Activated CD8-positive, alpha-beta T cell treated with anti-CD3 and anti-CD28 coated beads for 36 hours (primary cell): ENCODE measurements at regions of chr10 and their contacts with region 1.

Region 1: DNA sequence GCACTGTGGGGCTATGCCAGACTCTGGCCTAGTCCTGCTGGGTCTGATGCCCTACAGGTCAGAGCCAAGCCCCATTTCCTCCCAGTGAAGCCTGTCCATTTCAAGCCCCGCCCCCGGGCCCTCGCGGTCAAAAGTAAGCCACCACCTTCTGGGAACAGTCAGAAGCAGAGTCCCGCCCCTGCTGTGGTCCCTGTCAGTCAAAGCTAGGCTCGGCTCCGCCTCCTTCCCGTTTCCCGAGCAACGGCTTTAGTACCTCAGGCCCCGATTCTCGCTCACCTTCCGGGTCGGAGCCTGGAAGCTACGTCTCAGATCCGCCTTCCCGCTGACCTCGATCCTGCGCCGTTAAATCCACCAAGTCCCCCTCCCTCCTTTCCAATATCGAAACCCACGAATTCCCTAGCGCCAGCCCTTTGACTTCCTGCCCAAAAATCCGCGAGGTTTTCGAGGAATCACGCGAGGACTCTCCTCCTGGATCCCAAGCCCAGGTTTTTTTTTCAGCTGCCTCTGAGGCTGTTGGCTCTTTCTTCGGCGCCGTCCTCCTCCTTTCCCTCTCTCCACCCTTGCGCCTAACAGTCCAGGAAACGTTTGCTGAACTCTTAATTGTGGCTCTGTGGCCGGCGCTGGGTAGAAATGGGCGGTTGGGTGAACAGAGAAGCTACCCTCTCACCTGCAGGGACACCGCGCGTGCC is 11.8 kb downstream of the SFXN3 start:
- DNase-seq: peak; percentile 98
- ATAC-seq: peak; percentile 96
- H3K4me3 Mint-ChIP-seq: peak overlapping the region; percentile 80
- H3K27ac Mint-ChIP-seq: peak overlapping the region; percentile 81
- H3K4me1 Mint-ChIP-seq: peaks cover 21% of the 10 kb centered on the region
- H3K27me3 Mint-ChIP-seq: peaks cover 17% of the 10 kb centered on the region
- CTCF ChIP-seq: no peak

Region 2: GRCh38 chr10:101031128-101031795 is 11.5 kb before region 1 on chr10 and contains the starts of genes PDZD7 and SFXN3:
- CTCF ChIA-PET with region 1: interaction called, 22 read pairs
- POLR2A ChIA-PET with region 1: interaction called, 30 read pairs
- intact Hi-C with region 1: no loop called
- DNase-seq: peak; percentile 98
- ATAC-seq: peak; percentile 79
- H3K4me3 Mint-ChIP-seq: peak within 1 kb of the TSS; percentile 78
- H3K27ac Mint-ChIP-seq: peak within 1 kb of the TSS; percentile 90
- H3K4me1 Mint-ChIP-seq: peaks cover 10% of the 10 kb centered on the region
- H3K27me3 Mint-ChIP-seq: peaks cover 6% of the 10 kb centered on the region
- CTCF ChIP-seq: no peak
- total RNA-seq, gene PDZD7: 0.25 to 0.65 TPM
- total RNA-seq, gene SFXN3: 28.8 to 29.6 TPM

Region 3: GRCh38 chr10:101060036-101060950 is 17.5 kb after region 1 on chr10:
- CTCF ChIA-PET with region 1: interaction called, 655 read pairs
- POLR2A ChIA-PET with region 1: interaction called, 19 read pairs
- intact Hi-C with region 1: no loop called
- DNase-seq: peak; percentile 96
- ATAC-seq: peak; percentile 66
- H3K4me3 Mint-ChIP-seq: peak overlapping the region; percentile 82
- H3K27ac Mint-ChIP-seq: peak overlapping the region; percentile 96
- H3K4me1 Mint-ChIP-seq: peaks cover 18% of the 10 kb centered on the region
- H3K27me3 Mint-ChIP-seq: peaks cover 19% of the 10 kb centered on the region
- CTCF ChIP-seq: peak; percentile 97